Colonic mucosa (tissue), 4 donors: ENCODE measurements at regions of chr9 and their contacts with region 1.

Region 1: DNA sequence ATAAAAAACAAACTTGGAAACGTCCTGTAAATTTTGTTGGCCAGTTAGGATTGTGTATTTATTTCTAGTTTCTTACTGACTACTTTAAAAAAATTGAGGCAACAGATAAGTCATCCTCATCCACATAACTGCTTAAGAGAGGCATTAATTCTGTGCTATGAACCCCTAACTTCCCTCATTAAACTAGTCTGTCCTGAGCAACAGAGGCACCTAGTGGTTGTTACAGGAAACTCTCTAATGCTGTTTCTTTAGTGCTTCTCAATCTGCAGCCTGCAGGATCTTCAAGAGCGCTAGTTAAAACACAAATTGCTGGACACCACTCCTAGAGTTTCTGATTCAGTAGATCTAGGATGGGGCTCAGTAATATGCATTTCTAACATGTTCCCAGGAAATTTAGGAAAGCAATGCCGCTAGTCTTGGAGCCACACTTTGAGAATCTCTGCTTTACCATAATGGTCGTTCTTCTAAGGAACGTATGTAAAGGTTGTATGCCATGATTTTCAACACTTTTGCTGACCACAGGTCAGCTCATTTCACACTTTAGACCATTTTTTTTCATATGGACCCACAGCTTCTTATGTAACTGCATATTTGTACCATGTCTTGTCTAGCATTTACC is 410.1 kb upstream of the SMARCA2 start:
- DNase-seq: no peak
- H3K4me3 ChIP-seq: no peak overlapping the region
- H3K27ac ChIP-seq: no peak overlapping the region
- H3K4me1 ChIP-seq: no peaks in the 10 kb centered on the region
- H3K27me3 ChIP-seq: no peaks in the 10 kb centered on the region
- CTCF ChIP-seq: peak; percentile 34

Region 2: GRCh38 chr9:1373085-1373844 is 231.8 kb before region 1 on chr9:
- intact Hi-C with region 1: no loop called
- DNase-seq: no peak
- H3K4me3 ChIP-seq: no peak overlapping the region
- H3K27ac ChIP-seq: no peak overlapping the region
- H3K4me1 ChIP-seq: no peaks in the 10 kb centered on the region
- H3K27me3 ChIP-seq: no peaks in the 10 kb centered on the region
- CTCF ChIP-seq: no peak

Region 3: GRCh38 chr9:1460143-1460769 is 144.8 kb before region 1 on chr9:
- intact Hi-C with region 1: loop called (anchors 2 kb)
- DNase-seq: peak; percentile 29
- H3K4me3 ChIP-seq: no peak overlapping the region
- H3K27ac ChIP-seq: no peak overlapping the region
- H3K4me1 ChIP-seq: no peaks in the 10 kb centered on the region
- H3K27me3 ChIP-seq: no peaks in the 10 kb centered on the region
- CTCF ChIP-seq: peak; percentile 54